Gastrocnemius medialis (tissue), 4 donors: ENCODE measurements at regions of chr21 and their contacts with region 1.

Region 1: GRCh38 chr21:31173881-31174555 is 135.7 kb upstream of the KRTAP19-8 start:
- DNase-seq: peak in 1 of 2 donors; percentile 13
- ATAC-seq: peak; percentile 27 to 52
- H3K4me3 ChIP-seq: no peak overlapping the region
- H3K27ac ChIP-seq: peak overlapping the region in 1 of 4 donors; percentile 50
- H3K4me1 ChIP-seq: peaks cover 0 to 5% of the 10 kb centered on the region in 2 donors
- H3K27me3 ChIP-seq: no peaks in the 10 kb centered on the region
- CTCF ChIP-seq: no peak
- POLR2A ChIP-seq: no peak

Region 2: DNA sequence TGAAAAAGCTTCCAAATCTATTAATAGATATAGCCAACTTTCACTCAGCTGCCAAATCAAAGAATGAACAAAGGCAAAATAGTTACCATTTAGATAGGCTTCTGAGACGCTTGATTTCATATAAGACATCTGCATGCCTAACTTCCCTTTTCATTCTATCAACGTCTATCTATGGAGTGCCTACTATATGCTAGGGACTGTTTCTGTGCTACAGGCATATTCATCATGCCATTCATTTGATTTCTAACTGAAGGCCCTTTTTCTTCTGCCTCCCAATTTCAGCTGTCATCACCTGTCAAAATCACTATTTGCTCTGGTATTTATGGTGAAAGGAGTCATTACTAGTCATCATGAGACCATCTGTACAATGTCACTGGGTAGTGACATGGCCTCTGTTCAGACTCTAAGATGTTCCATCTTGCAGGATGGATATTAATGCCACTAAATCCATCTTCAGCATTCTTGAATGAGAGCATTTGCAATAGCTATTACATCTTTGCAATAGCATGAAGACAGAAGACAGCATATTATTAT is 782.5 kb before region 1 on chr21:
- in situ Hi-C with region 1: no loop called
- intact Hi-C with region 1: no loop called
- DNase-seq: no peak
- ATAC-seq: no peak
- H3K4me3 ChIP-seq: no peak overlapping the region
- H3K27ac ChIP-seq: no peak overlapping the region
- H3K4me1 ChIP-seq: no peaks in the 10 kb centered on the region
- H3K27me3 ChIP-seq: no peaks in the 10 kb centered on the region
- CTCF ChIP-seq: no peak
- POLR2A ChIP-seq: no peak

Region 3: DNA sequence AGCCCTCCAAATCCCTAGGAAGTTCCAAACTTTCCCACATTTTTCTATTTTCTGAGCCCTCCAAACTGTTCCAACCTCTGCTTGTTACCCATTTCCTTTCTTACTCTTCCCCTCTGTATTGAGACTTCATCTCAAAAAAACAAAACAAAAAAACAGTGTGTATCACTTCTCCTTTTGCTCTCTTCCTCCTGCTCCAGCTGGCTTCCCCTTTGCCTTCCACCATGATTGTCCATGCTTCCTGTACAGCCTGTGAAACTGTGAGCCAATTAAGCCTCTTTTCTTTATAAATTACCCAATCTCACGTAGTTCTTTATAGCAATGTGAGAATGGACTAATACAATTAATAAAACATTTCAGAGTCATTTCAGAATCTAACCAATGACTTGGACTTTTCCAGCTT is 66.1 kb before region 1 on chr21:
- in situ Hi-C with region 1: no loop called
- intact Hi-C with region 1: loop called (anchors 10 kb)
- DNase-seq: no peak
- ATAC-seq: no peak
- H3K4me3 ChIP-seq: no peak overlapping the region
- H3K27ac ChIP-seq: no peak overlapping the region
- H3K4me1 ChIP-seq: no peaks in the 10 kb centered on the region
- H3K27me3 ChIP-seq: no peaks in the 10 kb centered on the region
- CTCF ChIP-seq: no peak
- POLR2A ChIP-seq: no peak

Region 4: DNA sequence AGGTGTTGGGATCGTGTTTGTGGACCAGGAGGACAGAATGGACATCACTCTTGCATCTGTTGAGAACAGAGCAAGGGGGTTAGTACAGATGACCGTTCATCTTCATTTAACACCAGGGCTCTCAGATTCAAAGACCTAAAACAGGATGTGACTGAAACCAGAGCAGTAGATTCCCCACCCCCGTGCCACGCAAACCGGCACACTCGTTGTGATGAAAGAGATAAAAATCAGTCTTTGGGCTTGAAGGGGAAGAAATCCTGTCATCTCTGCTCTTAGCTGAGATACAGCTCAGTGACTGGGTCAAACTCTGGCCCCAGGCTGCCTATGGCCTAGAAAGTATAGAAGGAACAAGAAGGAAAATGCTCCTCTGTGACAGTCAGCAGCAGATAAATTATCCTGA is 10.4 kb after region 1 on chr21:
- in situ Hi-C with region 1: no loop called
- intact Hi-C with region 1: no loop called
- DNase-seq: no peak
- ATAC-seq: no peak
- H3K4me3 ChIP-seq: no peak overlapping the region
- H3K27ac ChIP-seq: no peak overlapping the region
- H3K4me1 ChIP-seq: no peaks in the 10 kb centered on the region
- H3K27me3 ChIP-seq: no peaks in the 10 kb centered on the region
- CTCF ChIP-seq: no peak
- POLR2A ChIP-seq: no peak

Region 5: GRCh38 chr21:31265366-31266013 is 91.5 kb after region 1 on chr21:
- in situ Hi-C with region 1: no loop called
- intact Hi-C with region 1: no loop called
- DNase-seq: peak in 1 of 2 donors; percentile 33
- ATAC-seq: peak in 1 of 2 donors; percentile 51
- H3K4me3 ChIP-seq: no peak overlapping the region
- H3K27ac ChIP-seq: no peak overlapping the region
- H3K4me1 ChIP-seq: no peaks in the 10 kb centered on the region
- H3K27me3 ChIP-seq: no peaks in the 10 kb centered on the region
- CTCF ChIP-seq: no peak
- POLR2A ChIP-seq: no peak